Pancreas (tissue), 10 donors: ENCODE measurements at regions of chr20 and their contacts with region 1.

Region 1: DNA sequence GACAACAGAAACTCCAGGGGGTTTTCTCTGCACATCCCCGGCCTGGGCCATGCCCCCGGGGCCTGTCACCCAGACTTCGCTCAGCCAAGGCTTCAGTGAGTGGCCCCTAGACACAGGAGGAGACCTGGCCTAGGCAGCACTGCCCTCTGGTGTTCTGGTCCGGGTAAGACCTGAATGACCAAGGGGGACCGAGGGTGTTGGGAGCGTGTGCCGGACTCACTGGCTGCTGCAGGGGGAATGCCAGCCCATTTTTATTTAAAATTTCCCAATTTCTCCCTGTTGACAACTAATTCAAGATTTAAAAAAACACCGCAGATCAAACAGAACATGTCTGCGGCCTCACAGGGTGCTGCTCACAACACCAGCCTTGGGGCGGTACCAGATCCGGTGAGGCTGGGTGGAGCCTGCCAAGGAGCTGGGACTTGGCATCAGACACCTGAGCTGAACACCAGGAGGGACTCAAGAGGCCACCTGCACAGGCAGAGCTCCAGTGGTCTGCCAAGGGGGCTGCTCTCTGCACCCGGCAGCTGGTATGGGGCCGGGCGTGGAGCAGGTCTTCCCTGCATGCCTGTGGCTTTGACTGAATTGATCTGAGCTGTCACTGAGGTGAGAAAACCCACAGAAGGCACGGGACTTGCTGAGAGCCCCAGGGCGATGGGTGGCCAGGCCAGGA is 47.8 kb downstream of the DSTN start:
- DNase-seq: peak; percentile 50 to 81 (median 72)
- ATAC-seq: peak in 3 of 4 donors; percentile 23 to 36 (median 31)
- H3K4me3 ChIP-seq: no peak overlapping the region
- H3K27ac ChIP-seq: no peak overlapping the region
- H3K4me1 ChIP-seq: peaks cover 11 to 37% (median 16%) of the 10 kb centered on the region in 3 donors
- H3K27me3 ChIP-seq: no peaks in the 10 kb centered on the region
- CTCF ChIP-seq: peak; percentile 28 to 47 (median 37)

Region 2: DNA sequence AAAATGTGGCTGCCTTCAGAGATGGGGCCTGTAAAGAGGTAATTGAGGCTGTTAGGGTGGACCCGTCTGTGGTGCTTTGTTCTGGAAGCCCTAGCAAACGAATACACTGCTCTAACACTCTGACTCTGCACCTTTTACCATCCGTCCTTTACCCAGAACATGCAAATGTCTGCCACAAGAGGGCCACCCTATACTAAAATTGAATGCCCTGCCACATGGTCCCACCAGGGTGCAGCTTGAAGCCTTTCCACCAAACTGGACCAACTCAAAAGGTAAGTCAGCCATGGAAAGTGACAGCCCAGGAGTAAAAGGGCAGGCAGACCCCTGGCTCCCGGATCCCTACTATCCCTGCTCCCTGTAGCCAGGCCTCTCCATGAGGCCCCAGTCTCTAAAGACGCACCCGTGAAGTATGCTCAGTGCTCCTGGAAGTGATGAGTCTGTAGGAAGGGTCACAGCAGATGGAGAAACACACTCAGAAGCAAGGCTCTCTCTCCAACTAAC is 80.7 kb before region 1 on chr20:
- intact Hi-C with region 1: loop called in 2 of 3 experiments (anchors 5 to 10 kb)
- DNase-seq: peak in 5 of 6 donors; percentile 46 to 83 (median 62)
- ATAC-seq: peak; percentile 97 to 99 (median 98)
- H3K4me3 ChIP-seq: no peak overlapping the region
- H3K27ac ChIP-seq: no peak overlapping the region
- H3K4me1 ChIP-seq: no peaks in the 10 kb centered on the region
- H3K27me3 ChIP-seq: no peaks in the 10 kb centered on the region
- CTCF ChIP-seq: peak; percentile 78 to 86 (median 81)

Region 3: GRCh38 chr20:17542993-17543412 is 74.7 kb before region 1 on chr20:
- intact Hi-C with region 1: loop called in 2 of 3 experiments (anchors 5 to 10 kb)
- DNase-seq: no peak
- ATAC-seq: peak in 3 of 4 donors; percentile 27 to 64 (median 49)
- H3K4me3 ChIP-seq: no peak overlapping the region
- H3K27ac ChIP-seq: peak overlapping the region in 1 of 4 donors; percentile 13
- H3K4me1 ChIP-seq: peaks cover 0 to 8% (median 0%) of the 10 kb centered on the region in 3 donors
- H3K27me3 ChIP-seq: no peaks in the 10 kb centered on the region
- CTCF ChIP-seq: no peak

Region 4: DNA sequence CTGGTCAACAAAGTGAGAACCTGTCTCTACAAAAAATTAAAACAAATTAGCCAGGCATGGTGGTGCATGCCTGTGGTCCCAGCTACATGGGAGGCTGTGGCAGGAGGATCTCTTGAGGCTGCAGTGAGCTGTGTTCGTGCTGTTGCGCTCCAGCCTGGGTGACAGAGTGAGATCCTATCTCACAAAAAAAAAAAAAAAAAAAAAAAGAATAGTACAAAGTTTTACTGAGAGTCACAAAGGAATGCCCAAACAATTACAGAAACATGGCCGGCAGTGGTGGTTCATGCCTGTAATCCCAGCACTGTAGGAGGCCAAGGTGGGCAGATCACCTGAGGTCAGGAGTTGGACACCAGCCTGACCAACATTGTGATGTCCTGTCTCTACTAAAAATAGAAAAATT is 62.6 kb before region 1 on chr20:
- intact Hi-C with region 1: no loop called
- DNase-seq: no peak
- ATAC-seq: no peak
- H3K4me3 ChIP-seq: no peak overlapping the region
- H3K27ac ChIP-seq: no peak overlapping the region
- H3K4me1 ChIP-seq: peaks cover 17 to 27% (median 19%) of the 10 kb centered on the region in 3 donors
- H3K27me3 ChIP-seq: no peaks in the 10 kb centered on the region
- CTCF ChIP-seq: no peak

Region 5: GRCh38 chr20:17662333-17663039 is 44.8 kb after region 1 on chr20:
- intact Hi-C with region 1: no loop called
- DNase-seq: peak in 3 of 6 donors; percentile 52 to 73 (median 66)
- ATAC-seq: peak; percentile 68 to 78 (median 74)
- H3K4me3 ChIP-seq: no peak overlapping the region
- H3K27ac ChIP-seq: peak overlapping the region in 3 of 4 donors; percentile 45 to 73 (median 64)
- H3K4me1 ChIP-seq: peaks cover 42 to 66% (median 52%) of the 10 kb centered on the region in 3 donors
- H3K27me3 ChIP-seq: no peaks in the 10 kb centered on the region
- CTCF ChIP-seq: no peak